ENCODE measurements at regions of chr7 and their contacts with region 1.

Region 1: DNA sequence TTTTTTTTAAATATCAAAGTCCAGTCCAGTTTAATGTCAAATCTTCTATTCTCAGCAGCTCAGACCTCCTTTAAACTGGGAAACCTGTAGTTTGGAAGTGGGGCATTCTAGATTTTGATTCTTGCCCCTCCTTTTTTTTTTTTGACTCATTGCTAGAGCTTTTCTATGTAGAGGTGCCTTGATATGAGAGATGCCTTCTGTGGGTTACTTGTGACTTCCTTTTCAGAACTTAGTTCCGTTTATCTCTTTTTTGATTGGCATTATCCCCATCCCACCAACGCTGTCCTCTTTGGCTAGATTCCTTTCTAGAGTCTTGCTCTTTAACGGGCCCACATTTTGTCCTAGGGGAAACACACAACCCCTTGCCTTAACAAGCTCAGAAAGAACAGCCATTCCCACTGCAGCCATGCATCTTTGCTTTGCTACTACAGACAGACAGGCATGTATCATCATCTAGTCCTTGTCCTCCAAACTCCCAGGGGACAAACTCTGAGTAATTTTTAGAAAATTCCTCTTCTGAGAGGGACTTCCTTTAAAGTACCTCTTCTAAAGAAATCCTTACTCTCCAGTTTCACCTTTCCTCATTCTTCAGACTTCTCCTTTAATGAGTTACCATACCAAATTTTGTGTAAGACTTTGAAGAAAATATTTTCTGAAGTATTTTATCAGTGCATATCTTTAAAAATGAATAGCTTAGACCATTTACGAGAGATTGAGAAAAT is 153.6 kb downstream of the PHF14 start:
- DNase-seq: no peak
- H3K4me3 ChIP-seq: no peak overlapping the region
- H3K27ac ChIP-seq: no peak overlapping the region
- H3K4me1 ChIP-seq: no peaks in the 10 kb centered on the region
- H3K27me3 ChIP-seq: no peaks in the 10 kb centered on the region
- CTCF ChIP-seq: no peak
- EP300 ChIP-seq: no peak
- POLR2A ChIP-seq: no peak

Region 2: DNA sequence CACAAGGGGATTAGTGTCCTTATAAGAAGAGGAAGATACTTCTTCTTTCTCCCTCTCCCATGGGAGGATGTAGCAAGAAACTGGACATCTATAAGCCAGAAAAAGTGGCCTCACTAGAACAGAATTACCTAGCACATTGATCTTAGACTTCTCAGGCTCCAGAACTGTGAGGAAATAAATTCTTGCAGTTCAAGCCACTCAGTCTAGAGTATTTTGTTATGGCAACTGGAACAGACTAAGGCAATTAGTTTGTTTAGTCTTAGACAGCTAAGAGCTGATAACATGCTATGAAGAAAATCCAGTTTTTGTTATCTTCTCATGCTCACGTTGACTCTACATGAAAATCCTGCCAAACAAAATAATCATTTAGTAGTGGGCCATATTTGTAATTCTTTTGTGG is 781.2 kb before region 1 on chr7:
- in situ Hi-C with region 1: no loop called
- intact Hi-C with region 1: no loop called
- DNase-seq: no peak
- H3K4me3 ChIP-seq: no peak overlapping the region
- H3K27ac ChIP-seq: no peak overlapping the region
- H3K4me1 ChIP-seq: no peaks in the 10 kb centered on the region
- H3K27me3 ChIP-seq: no peaks in the 10 kb centered on the region
- CTCF ChIP-seq: no peak
- EP300 ChIP-seq: no peak
- POLR2A ChIP-seq: no peak

Region 3: DNA sequence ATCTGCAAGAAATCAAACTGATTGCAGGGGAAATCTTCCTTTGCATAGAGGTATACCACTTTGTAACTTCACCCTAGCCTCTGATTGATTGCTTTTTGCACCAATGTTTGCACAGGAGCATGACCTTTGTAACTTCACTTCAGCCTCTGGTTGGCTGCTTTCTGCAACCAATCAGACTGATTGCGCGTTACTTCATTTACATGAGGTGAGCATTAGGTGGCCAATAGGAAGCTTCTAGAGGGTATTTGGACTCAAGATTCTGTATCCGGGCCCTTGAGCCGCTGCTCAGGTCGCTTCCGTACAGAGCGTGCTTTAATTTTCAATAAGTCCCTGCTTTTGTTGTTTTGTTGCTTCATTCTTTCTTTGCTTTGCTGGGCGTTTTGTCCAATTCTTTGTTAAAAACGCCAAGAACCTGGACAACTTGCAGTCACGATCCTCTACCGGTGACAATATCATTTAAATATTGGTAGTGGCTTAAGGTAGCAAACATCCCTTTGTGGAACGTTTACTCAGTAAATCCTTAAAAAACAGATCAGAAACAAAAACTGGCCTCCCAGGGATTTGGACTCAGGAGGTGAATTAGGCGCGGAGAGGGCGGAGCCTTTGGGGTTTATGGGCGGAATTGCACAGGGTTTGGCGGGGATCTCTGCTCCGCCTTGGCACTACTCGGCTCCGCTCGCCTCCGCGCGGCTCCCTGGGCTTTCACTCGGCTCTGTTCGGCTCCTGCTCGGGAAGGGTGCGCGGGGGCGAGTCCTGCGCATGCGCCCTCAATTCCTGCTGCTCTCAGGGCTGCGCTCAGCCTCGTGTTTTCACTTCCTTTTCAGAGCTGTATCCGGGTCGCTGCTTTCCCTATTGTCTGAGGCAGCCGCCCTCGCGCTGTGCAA is 154.0 kb before region 1 on chr7 and contains the start of gene PHF14:
- in situ Hi-C with region 1: no loop called
- intact Hi-C with region 1: no loop called
- DNase-seq: peak; percentile 98
- H3K4me3 ChIP-seq: peak within 1 kb of the TSS; percentile 63 to 98 (median 90)
- H3K27ac ChIP-seq: peak within 1 kb of the TSS; percentile 87 to 96 (median 92)
- H3K4me1 ChIP-seq: peaks cover 6 to 18% (median 7%) of the 10 kb centered on the region in 4 donors
- H3K27me3 ChIP-seq: no peaks in the 10 kb centered on the region
- CTCF ChIP-seq: no peak
- EP300 ChIP-seq: no peak
- POLR2A ChIP-seq: peak; percentile 85
- total RNA-seq, gene PHF14: 24.3 to 42.1 (median 28.8) TPM

Region 4: GRCh38 chr7:11170175-11170574 is 42.9 kb after region 1 on chr7:
- in situ Hi-C with region 1: no loop called
- intact Hi-C with region 1: no loop called
- DNase-seq: no peak
- H3K4me3 ChIP-seq: no peak overlapping the region
- H3K27ac ChIP-seq: no peak overlapping the region
- H3K4me1 ChIP-seq: no peaks in the 10 kb centered on the region
- H3K27me3 ChIP-seq: no peaks in the 10 kb centered on the region
- CTCF ChIP-seq: no peak
- EP300 ChIP-seq: no peak
- POLR2A ChIP-seq: no peak

Region 5: DNA sequence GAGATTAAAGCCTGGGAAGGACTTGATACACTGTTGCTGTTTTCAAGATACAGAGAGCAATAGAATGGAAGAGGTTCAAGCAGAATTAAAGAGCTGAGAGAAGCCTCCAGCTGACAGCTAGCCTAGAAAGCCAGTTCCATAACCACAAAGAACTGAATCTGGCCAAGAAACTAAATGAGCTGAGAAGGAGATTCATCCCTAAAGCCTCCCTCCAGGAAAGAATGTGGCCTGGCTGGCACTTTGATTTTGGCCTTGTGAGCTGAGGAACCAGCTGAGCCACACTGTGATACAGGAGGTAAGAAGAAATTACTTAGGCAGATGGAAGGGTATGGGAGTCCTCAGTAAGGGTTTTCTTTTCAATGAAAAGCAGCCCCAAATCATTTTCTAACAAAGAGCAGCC is 170.5 kb after region 1 on chr7:
- in situ Hi-C with region 1: no loop called
- intact Hi-C with region 1: no loop called
- DNase-seq: no peak
- H3K4me3 ChIP-seq: no peak overlapping the region
- H3K27ac ChIP-seq: no peak overlapping the region
- H3K4me1 ChIP-seq: no peaks in the 10 kb centered on the region
- H3K27me3 ChIP-seq: no peaks in the 10 kb centered on the region
- CTCF ChIP-seq: no peak
- EP300 ChIP-seq: no peak
- POLR2A ChIP-seq: no peak

Region 6: GRCh38 chr7:11623093-11623678 is 495.9 kb after region 1 on chr7:
- in situ Hi-C with region 1: no loop called
- intact Hi-C with region 1: loop called (anchors 5 kb)
- DNase-seq: no peak
- H3K4me3 ChIP-seq: no peak overlapping the region
- H3K27ac ChIP-seq: no peak overlapping the region
- H3K4me1 ChIP-seq: no peaks in the 10 kb centered on the region
- H3K27me3 ChIP-seq: no peaks in the 10 kb centered on the region
- CTCF ChIP-seq: no peak
- EP300 ChIP-seq: no peak
- POLR2A ChIP-seq: no peak

Measured in transverse colon (tissue), 4 donors.